ENCODE measurements at regions of chr12 and their contacts with region 1.

Region 1: GRCh38 chr12:130818635-130819576 is 20.1 kb downstream of the STX2 start:
- DNase-seq: peak; percentile 67 to 83
- H3K4me3 ChIP-seq: peak overlapping the region; percentile 37
- H3K4me3 Mint-ChIP-seq: peak overlapping the region; percentile 85
- H3K27ac Mint-ChIP-seq: peak overlapping the region; percentile 78
- H3K4me1 ChIP-seq: no peaks in the 10 kb centered on the region
- H3K4me1 Mint-ChIP-seq: peaks cover 6% of the 10 kb centered on the region
- H3K27me3 ChIP-seq: no peaks in the 10 kb centered on the region
- H3K27me3 Mint-ChIP-seq: no peaks in the 10 kb centered on the region
- CTCF ChIP-seq: peak; percentile 63 to 76

Region 2: GRCh38 chr12:130401703-130402102 is 417.2 kb before region 1 on chr12:
- CTCF ChIA-PET with region 1: no interaction called
- POLR2A ChIA-PET with region 1: no interaction called
- intact Hi-C with region 1: loop called (anchors 5 kb)
- DNase-seq: peak in 1 of 2 experiments; percentile 26
- H3K4me3 ChIP-seq: no peak overlapping the region
- H3K4me3 Mint-ChIP-seq: no peak overlapping the region
- H3K27ac Mint-ChIP-seq: no peak overlapping the region
- H3K4me1 ChIP-seq: peaks cover 11% of the 10 kb centered on the region
- H3K4me1 Mint-ChIP-seq: peaks cover 12% of the 10 kb centered on the region
- H3K27me3 ChIP-seq: no peaks in the 10 kb centered on the region
- H3K27me3 Mint-ChIP-seq: no peaks in the 10 kb centered on the region
- CTCF ChIP-seq: peak in 1 of 2 experiments; percentile 46

Region 3: GRCh38 chr12:130557876-130558765 is 260.8 kb before region 1 on chr12:
- CTCF ChIA-PET with region 1: no interaction called
- POLR2A ChIA-PET with region 1: no interaction called
- intact Hi-C with region 1: no loop called
- DNase-seq: no peak
- H3K4me3 ChIP-seq: no peak overlapping the region
- H3K4me3 Mint-ChIP-seq: peak overlapping the region; percentile 42
- H3K27ac Mint-ChIP-seq: no peak overlapping the region
- H3K4me1 ChIP-seq: peaks cover 6% of the 10 kb centered on the region; the same call in 1 of the 2 replicates
- H3K4me1 Mint-ChIP-seq: peaks cover 4% of the 10 kb centered on the region
- H3K27me3 ChIP-seq: no peaks in the 10 kb centered on the region; the same call in 1 of the 2 replicates
- H3K27me3 Mint-ChIP-seq: peaks cover 3% of the 10 kb centered on the region
- CTCF ChIP-seq: no peak

Region 4: GRCh38 chr12:130761537-130762318 is 57.2 kb before region 1 on chr12:
- CTCF ChIA-PET with region 1: no interaction called
- POLR2A ChIA-PET with region 1: no interaction called
- intact Hi-C with region 1: loop called (anchors 1 kb)
- DNase-seq: peak; percentile 72 to 76
- H3K4me3 ChIP-seq: no peak overlapping the region
- H3K4me3 Mint-ChIP-seq: no peak overlapping the region
- H3K27ac Mint-ChIP-seq: no peak overlapping the region
- H3K4me1 ChIP-seq: peaks cover 5% of the 10 kb centered on the region; the same call in 1 of the 2 replicates
- H3K4me1 Mint-ChIP-seq: no peaks in the 10 kb centered on the region
- H3K27me3 ChIP-seq: no peaks in the 10 kb centered on the region
- H3K27me3 Mint-ChIP-seq: no peaks in the 10 kb centered on the region
- CTCF ChIP-seq: peak; percentile 68 to 77